ENCODE measurements at regions of chr1 and their contacts with region 1.

Region 1: DNA sequence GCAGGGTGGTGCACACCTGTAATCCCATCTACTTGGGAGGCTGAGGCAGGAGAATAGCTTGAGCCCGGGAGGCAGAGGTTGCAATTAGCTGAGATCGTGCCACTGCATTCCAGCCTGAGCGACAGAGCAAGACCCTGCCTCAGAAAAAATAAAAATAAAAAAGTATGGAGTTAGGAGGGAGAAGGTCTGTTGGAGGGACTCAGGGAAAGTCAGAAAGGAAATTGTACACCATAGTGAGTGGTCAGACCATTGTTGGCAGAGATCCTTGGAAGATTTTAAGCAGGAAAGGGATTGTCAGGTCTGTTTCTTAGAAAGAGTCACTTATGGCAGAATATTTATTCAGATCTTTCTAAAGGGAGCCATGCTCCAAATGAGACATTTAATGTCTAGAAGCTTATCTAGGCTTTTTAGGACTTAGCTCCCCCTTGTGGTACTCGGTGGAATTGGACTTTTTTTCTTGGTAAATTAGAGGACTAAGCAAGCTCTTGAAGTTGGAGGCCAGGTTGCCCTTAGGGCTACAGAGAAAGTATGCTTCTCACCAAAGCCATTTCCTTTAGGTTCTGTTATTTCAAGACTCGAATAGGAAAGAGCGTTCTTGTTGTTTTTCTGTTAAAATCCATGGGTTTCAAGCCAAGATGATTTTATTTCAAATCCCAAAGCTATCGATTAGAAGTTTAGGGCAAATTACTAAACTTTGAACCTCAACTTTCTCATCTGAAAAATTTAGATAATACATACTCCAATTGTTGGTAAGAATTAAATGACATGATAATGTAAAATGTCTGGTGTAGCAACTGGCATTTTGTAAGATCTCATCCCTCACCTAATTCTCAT is 16.5 kb downstream of the MIA3 start:
- DNase-seq: no peak
- H3K4me3 ChIP-seq: no peak overlapping the region
- H3K27ac ChIP-seq: peak overlapping the region in 1 of 4 donors; percentile 9
- H3K4me1 ChIP-seq: no peaks in the 10 kb centered on the region
- H3K27me3 ChIP-seq: no peaks in the 10 kb centered on the region
- CTCF ChIP-seq: peak; percentile 83 to 91 (median 87)
- EP300 ChIP-seq: no peak
- POLR2A ChIP-seq: no peak

Region 2: GRCh38 chr1:222465211-222466041 is 169.0 kb before region 1 on chr1:
- intact Hi-C with region 1: loop called (anchors 1 kb)
- DNase-seq: peak; percentile 95
- H3K4me3 ChIP-seq: peak overlapping the region; percentile 48 to 54 (median 50)
- H3K27ac ChIP-seq: peak overlapping the region; percentile 75 to 86 (median 80)
- H3K4me1 ChIP-seq: peaks cover 0 to 16% (median 10%) of the 10 kb centered on the region in 4 donors
- H3K27me3 ChIP-seq: no peaks in the 10 kb centered on the region
- CTCF ChIP-seq: peak in 2 of 3 experiments; percentile 99 to 100
- EP300 ChIP-seq: no peak
- POLR2A ChIP-seq: no peak

Region 3: DNA sequence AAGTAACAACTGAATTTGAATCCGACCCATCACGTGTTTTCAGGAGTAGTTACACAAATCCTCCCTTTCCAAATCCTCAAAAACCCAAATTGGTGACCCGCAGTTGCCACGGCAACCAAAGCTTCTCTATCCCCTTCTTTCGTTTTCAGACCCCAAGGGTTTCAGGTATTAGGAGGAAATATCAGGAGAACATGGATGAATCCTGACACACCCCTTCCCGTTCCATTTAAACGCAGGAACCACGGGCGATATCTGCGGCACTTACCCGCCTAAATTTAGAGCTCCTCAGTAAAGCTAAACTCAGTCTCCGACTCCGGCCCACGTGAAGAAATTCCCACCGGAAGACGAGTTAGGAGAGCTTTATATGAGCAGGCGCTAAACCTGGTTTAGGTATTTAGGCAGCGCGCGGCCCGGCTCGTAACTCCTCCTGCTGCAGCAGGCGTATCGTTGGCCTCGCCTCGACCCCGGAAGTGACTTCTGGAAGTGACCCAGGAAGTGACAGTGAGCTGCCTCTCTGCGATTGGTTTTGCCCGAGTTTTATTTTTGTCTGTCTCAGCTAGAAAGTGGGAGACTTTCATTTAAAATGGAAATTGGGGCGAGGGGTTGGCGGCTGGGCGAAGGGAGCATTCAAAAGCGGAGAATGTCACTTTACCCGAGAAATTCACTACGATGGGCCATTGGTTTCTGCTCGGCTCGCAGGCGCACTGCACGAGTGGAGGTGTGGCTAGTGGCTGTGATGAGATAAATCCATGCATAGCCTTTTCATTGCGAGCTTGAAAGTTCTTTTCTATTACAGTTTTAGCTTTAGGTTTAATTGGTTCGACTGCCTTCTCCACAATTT is 44.7 kb before region 1 on chr1 and contains the start of gene TAF1A:
- intact Hi-C with region 1: loop called (anchors 5 kb)
- DNase-seq: peak; percentile 96
- H3K4me3 ChIP-seq: peak within 1 kb of the TSS; percentile 61 to 74 (median 66)
- H3K27ac ChIP-seq: peak within 1 kb of the TSS; percentile 74 to 84 (median 80)
- H3K4me1 ChIP-seq: peaks cover 15 to 26% (median 21%) of the 10 kb centered on the region in 4 donors
- H3K27me3 ChIP-seq: no peaks in the 10 kb centered on the region
- CTCF ChIP-seq: peak in 1 of 3 experiments; percentile 5
- EP300 ChIP-seq: no peak
- POLR2A ChIP-seq: no peak
- total RNA-seq, gene TAF1A: 2.5 to 4.5 (median 3.9) TPM

Region 4: GRCh38 chr1:222706815-222707214 is 72.4 kb after region 1 on chr1:
- intact Hi-C with region 1: no loop called
- DNase-seq: no peak
- H3K4me3 ChIP-seq: no peak overlapping the region
- H3K27ac ChIP-seq: no peak overlapping the region
- H3K4me1 ChIP-seq: peaks cover 14 to 29% (median 26%) of the 10 kb centered on the region in 4 donors
- H3K27me3 ChIP-seq: no peaks in the 10 kb centered on the region
- CTCF ChIP-seq: peak in 1 of 3 experiments; percentile 8
- EP300 ChIP-seq: no peak
- POLR2A ChIP-seq: no peak